Calu3 (cell line): ENCODE measurements at regions of chr17 and their contacts with region 1.

Region 1: GRCh38 chr17:77515227-77515626 is 374.5 kb downstream of the SEC14L1 start:
- DNase-seq: no peak
- H3K4me3 Mint-ChIP-seq: no peak overlapping the region
- H3K27ac Mint-ChIP-seq: no peak overlapping the region
- H3K4me1 Mint-ChIP-seq: no peaks in the 10 kb centered on the region
- H3K27me3 Mint-ChIP-seq: no peaks in the 10 kb centered on the region
- CTCF ChIP-seq: no peak

Region 2: DNA sequence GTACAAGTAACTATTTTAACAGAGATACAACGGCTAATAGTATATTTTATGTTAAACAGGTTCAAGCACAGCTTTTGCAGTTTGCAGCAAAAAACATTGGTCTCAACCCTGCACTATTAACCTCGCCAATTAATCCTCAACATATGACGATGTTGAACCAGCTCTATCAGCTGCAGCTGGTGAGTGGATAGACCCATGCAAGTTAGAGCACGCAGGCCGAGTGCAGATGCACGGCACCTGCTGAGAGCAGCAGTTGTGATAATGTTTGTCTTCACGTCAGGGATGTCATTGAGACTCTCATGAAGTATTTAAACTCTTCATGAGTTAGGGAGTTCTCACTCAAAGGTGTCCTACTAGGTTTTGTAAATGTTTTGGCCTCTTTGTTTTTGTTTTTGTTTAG is 567.8 kb after region 1 on chr17:
- CTCF ChIA-PET with region 1: interaction called, 10 read pairs
- intact Hi-C with region 1: no loop called
- DNase-seq: no peak
- H3K4me3 Mint-ChIP-seq: no peak overlapping the region
- H3K27ac Mint-ChIP-seq: no peak overlapping the region
- H3K4me1 Mint-ChIP-seq: no peaks in the 10 kb centered on the region
- H3K27me3 Mint-ChIP-seq: no peaks in the 10 kb centered on the region
- CTCF ChIP-seq: no peak